ENCODE measurements at regions of chr17 and their contacts with region 1.

Region 1: GRCh38 chr17:71405107-71405506 is 715.7 kb upstream of the SOX9 start:
- DNase-seq: no peak
- ATAC-seq: no peak
- H3K4me3 ChIP-seq: no peak overlapping the region
- H3K27ac ChIP-seq: no peak overlapping the region
- H3K4me1 ChIP-seq: no peaks in the 10 kb centered on the region
- H3K27me3 ChIP-seq: no peaks in the 10 kb centered on the region
- CTCF ChIP-seq: no peak
- EP300 ChIP-seq: no peak
- POLR2A ChIP-seq: no peak
- RAD21 ChIP-seq: no peak

Region 2: GRCh38 chr17:71392715-71393567 is 12.2 kb before region 1 on chr17:
- CTCF ChIA-PET with region 1: no interaction called
- POLR2A ChIA-PET with region 1: no interaction called
- in situ Hi-C with region 1: no loop called
- intact Hi-C with region 1: loop called (anchors 1 kb)
- DNase-seq: no peak
- ATAC-seq: no peak
- H3K4me3 ChIP-seq: no peak overlapping the region
- H3K27ac ChIP-seq: no peak overlapping the region
- H3K4me1 ChIP-seq: no peaks in the 10 kb centered on the region
- H3K27me3 ChIP-seq: no peaks in the 10 kb centered on the region
- CTCF ChIP-seq: no peak
- EP300 ChIP-seq: no peak
- POLR2A ChIP-seq: no peak
- RAD21 ChIP-seq: no peak

Region 3: GRCh38 chr17:71460943-71461342 is 55.8 kb after region 1 on chr17:
- CTCF ChIA-PET with region 1: no interaction called
- POLR2A ChIA-PET with region 1: no interaction called
- in situ Hi-C with region 1: no loop called
- intact Hi-C with region 1: no loop called
- DNase-seq: no peak
- ATAC-seq: no peak
- H3K4me3 ChIP-seq: no peak overlapping the region
- H3K27ac ChIP-seq: no peak overlapping the region
- H3K4me1 ChIP-seq: no peaks in the 10 kb centered on the region
- H3K27me3 ChIP-seq: peaks cover 0 to 4% of the 10 kb centered on the region in 2 experiments; a peak in 1 of 5 replicates
- CTCF ChIP-seq: no peak
- EP300 ChIP-seq: no peak
- POLR2A ChIP-seq: no peak
- RAD21 ChIP-seq: no peak

Measured in HepG2 (cell line).